Right cardiac atrium (tissue), 5 donors: ENCODE measurements at regions of chr14 and their contacts with region 1.

Region 1: DNA sequence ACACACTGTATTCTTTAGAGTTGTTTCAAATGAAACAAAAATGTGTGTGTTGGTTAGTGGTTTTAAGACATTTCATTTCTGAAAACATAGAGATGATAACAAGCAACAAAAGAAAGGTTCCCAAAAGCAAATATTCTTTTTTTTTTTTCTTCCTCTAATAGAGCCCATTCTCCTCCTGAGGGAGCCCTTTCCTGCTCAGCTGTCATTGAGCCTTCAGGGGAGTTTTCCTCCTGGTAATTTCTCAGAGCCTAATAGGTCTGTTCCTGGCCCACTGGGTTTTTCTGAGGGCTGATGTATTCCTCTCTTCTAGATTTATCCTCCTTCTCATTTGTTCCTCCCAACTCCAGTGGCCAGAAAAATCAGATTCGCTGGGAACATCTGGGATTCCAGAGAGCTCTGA is 654.5 kb downstream of the NOVA1 start:
- DNase-seq: no peak
- ATAC-seq: no peak
- H3K4me3 ChIP-seq: no peak overlapping the region
- H3K27ac ChIP-seq: no peak overlapping the region
- H3K4me1 ChIP-seq: no peaks in the 10 kb centered on the region
- H3K27me3 ChIP-seq: no peaks in the 10 kb centered on the region

Region 2: GRCh38 chr14:25899197-25899596 is 44.1 kb before region 1 on chr14:
- intact Hi-C with region 1: loop called in 1 of 4 experiments (anchors 2 kb)
- DNase-seq: no peak
- ATAC-seq: no peak
- H3K4me3 ChIP-seq: no peak overlapping the region
- H3K27ac ChIP-seq: no peak overlapping the region
- H3K4me1 ChIP-seq: no peaks in the 10 kb centered on the region
- H3K27me3 ChIP-seq: no peaks in the 10 kb centered on the region

Region 3: GRCh38 chr14:25988536-25988935 is 45.2 kb after region 1 on chr14:
- intact Hi-C with region 1: no loop called
- DNase-seq: no peak
- ATAC-seq: no peak
- H3K4me3 ChIP-seq: no peak overlapping the region
- H3K27ac ChIP-seq: no peak overlapping the region
- H3K4me1 ChIP-seq: no peaks in the 10 kb centered on the region
- H3K27me3 ChIP-seq: no peaks in the 10 kb centered on the region